ENCODE measurements at regions of chr12 and their contacts with region 1.

Region 1: GRCh38 chr12:57069523-57069922 is 9.1 kb downstream of the NEMP1 start:
- DNase-seq: peak; percentile 85
- ATAC-seq: peak; percentile 100
- H3K4me3 ChIP-seq: no peak overlapping the region
- H3K4me3 Mint-ChIP-seq: no peak overlapping the region
- H3K27ac ChIP-seq: peak overlapping the region; percentile 30 to 53
- H3K27ac Mint-ChIP-seq: peak overlapping the region; percentile 82
- H3K4me1 ChIP-seq: peaks cover 12 to 23% of the 10 kb centered on the region in 2 donors
- H3K4me1 Mint-ChIP-seq: peaks cover 32% of the 10 kb centered on the region
- H3K27me3 ChIP-seq: no peaks in the 10 kb centered on the region
- H3K27me3 Mint-ChIP-seq: no peaks in the 10 kb centered on the region
- CTCF ChIP-seq: peak; percentile 85

Region 2: GRCh38 chr12:57005980-57006808 is 63.3 kb before region 1 on chr12 and contains the start of gene ZBTB39:
- CTCF ChIA-PET with region 1: interaction called, 11 read pairs
- POLR2A ChIA-PET with region 1: no interaction called
- intact Hi-C with region 1: no loop called
- DNase-seq: peak; percentile 84
- ATAC-seq: peak; percentile 92
- H3K4me3 ChIP-seq: peak within 1 kb of the TSS; percentile 39 to 87 (median 70)
- H3K4me3 Mint-ChIP-seq: peak within 1 kb of the TSS; percentile 91
- H3K27ac ChIP-seq: peak within 1 kb of the TSS; percentile 43 to 86
- H3K27ac Mint-ChIP-seq: peak within 1 kb of the TSS; percentile 93
- H3K4me1 ChIP-seq: peaks cover 16 to 21% of the 10 kb centered on the region in 2 donors
- H3K4me1 Mint-ChIP-seq: peaks cover 41% of the 10 kb centered on the region
- H3K27me3 ChIP-seq: no peaks in the 10 kb centered on the region
- H3K27me3 Mint-ChIP-seq: no peaks in the 10 kb centered on the region
- CTCF ChIP-seq: peak; percentile 61
- total RNA-seq, gene ZBTB39: 13.9 and 15.6 TPM in 2 replicates

Region 3: DNA sequence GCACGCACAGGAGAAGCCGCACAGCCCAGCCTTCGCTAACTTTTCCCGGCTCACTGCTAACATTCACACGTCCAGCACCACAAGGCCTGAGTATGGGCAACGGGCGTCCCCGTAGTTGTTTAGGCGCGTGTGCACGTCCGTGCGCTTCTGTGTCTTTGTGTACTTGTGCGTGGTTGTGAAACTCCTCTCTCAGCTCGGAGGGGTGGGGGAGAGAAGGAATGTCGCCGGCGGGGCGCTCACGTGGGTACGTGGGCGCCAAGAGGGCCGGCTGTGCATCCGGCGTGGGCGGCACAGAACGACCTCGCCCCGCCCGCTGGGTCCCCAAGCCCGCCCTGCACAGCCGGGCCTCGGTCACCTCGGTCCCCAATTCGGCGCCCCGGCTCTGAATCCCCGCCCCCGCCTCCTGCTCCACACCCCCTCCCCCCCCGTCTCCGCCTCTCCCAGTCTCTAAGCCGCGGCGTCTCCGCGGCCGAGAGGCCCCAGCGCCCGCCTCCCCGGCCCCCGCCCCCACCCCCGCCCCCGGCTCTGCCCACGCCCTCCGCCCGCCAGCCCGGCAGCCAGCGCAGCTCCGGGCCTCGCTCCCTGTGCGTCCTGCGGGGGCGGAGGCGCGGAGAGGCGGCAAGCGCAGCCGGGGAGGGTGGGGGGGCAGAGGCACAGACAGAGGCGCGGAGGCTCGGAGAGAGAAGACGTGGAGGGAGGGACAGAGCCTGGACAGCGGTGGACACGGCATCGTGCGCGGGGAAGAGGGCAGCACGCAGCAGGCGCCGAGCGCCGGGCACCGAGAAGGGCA is 19.1 kb after region 1 on chr12 and contains the start of gene NAB2:
- CTCF ChIA-PET with region 1: interaction called, 406 read pairs
- POLR2A ChIA-PET with region 1: interaction called, 15 read pairs
- intact Hi-C with region 1: loop called (anchors 1 kb)
- DNase-seq: peak; percentile 96
- ATAC-seq: peak; percentile 62
- H3K4me3 ChIP-seq: peak within 1 kb of the TSS; percentile 75 to 100 (median 80)
- H3K4me3 Mint-ChIP-seq: peak within 1 kb of the TSS; percentile 92
- H3K27ac ChIP-seq: peak within 1 kb of the TSS; percentile 98 to 99
- H3K27ac Mint-ChIP-seq: peak within 1 kb of the TSS; percentile 91
- H3K4me1 ChIP-seq: peaks cover 18 to 40% of the 10 kb centered on the region in 2 donors
- H3K4me1 Mint-ChIP-seq: peaks cover 55% of the 10 kb centered on the region
- H3K27me3 ChIP-seq: no peaks in the 10 kb centered on the region
- H3K27me3 Mint-ChIP-seq: no peaks in the 10 kb centered on the region
- CTCF ChIP-seq: no peak
- total RNA-seq, gene NAB2: 49.0 and 52.1 TPM in 2 replicates

Region 4: DNA sequence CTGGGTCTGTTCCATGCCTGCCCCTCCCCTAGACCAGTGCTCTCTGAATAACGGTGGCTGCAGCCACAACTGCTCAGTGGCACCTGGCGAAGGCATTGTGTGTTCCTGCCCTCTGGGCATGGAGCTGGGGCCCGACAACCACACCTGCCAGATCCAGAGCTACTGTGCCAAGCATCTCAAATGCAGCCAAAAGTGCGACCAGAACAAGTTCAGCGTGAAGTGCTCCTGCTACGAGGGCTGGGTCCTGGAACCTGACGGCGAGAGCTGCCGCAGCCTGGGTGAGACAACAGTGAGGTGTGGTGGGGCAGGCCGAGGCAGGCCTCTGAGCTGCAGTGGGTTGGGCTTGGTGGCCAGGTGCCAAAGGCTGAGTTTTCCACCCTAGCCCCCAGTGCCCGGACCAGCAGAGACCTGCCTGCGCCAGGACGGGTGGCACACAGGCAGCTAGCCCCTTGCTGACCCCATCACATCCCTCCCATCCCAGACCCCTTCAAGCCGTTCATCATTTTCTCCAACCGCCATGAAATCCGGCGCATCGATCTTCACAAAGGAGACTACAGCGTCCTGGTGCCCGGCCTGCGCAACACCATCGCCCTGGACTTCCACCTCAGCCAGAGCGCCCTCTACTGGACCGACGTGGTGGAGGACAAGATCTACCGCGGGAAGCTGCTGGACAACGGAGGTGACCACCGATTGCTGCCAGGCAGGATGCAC is 106.1 kb after region 1 on chr12:
- CTCF ChIA-PET with region 1: interaction called, 10 read pairs
- POLR2A ChIA-PET with region 1: no interaction called
- intact Hi-C with region 1: loop called (anchors 2 kb)
- DNase-seq: peak; percentile 36
- ATAC-seq: no peak
- H3K4me3 ChIP-seq: no peak overlapping the region
- H3K4me3 Mint-ChIP-seq: no peak overlapping the region
- H3K27ac ChIP-seq: no peak overlapping the region
- H3K27ac Mint-ChIP-seq: no peak overlapping the region
- H3K4me1 ChIP-seq: no peaks in the 10 kb centered on the region
- H3K4me1 Mint-ChIP-seq: no peaks in the 10 kb centered on the region
- H3K27me3 ChIP-seq: no peaks in the 10 kb centered on the region
- H3K27me3 Mint-ChIP-seq: peaks cover 5% of the 10 kb centered on the region
- CTCF ChIP-seq: peak; percentile 49

Region 5: GRCh38 chr12:57238854-57239554 is 169.5 kb after region 1 on chr12:
- CTCF ChIA-PET with region 1: interaction called, 5 read pairs
- POLR2A ChIA-PET with region 1: no interaction called
- intact Hi-C with region 1: loop called (anchors 5 kb)
- DNase-seq: peak; percentile 93
- ATAC-seq: peak; percentile 46
- H3K4me3 ChIP-seq: peak overlapping the region; percentile 19 to 79 (median 75)
- H3K4me3 Mint-ChIP-seq: peak overlapping the region; percentile 89
- H3K27ac ChIP-seq: no peak overlapping the region
- H3K27ac Mint-ChIP-seq: peak overlapping the region; percentile 92
- H3K4me1 ChIP-seq: peaks cover 92 to 99% of the 10 kb centered on the region in 2 donors
- H3K4me1 Mint-ChIP-seq: peaks cover 92% of the 10 kb centered on the region
- H3K27me3 ChIP-seq: peaks cover 0 to 70% (median 30%) of the 10 kb centered on the region in 4 experiments
- H3K27me3 Mint-ChIP-seq: peaks cover 12% of the 10 kb centered on the region
- CTCF ChIP-seq: peak; percentile 100